ENCODE measurements at regions of chr18 and their contacts with region 1.

Region 1: DNA sequence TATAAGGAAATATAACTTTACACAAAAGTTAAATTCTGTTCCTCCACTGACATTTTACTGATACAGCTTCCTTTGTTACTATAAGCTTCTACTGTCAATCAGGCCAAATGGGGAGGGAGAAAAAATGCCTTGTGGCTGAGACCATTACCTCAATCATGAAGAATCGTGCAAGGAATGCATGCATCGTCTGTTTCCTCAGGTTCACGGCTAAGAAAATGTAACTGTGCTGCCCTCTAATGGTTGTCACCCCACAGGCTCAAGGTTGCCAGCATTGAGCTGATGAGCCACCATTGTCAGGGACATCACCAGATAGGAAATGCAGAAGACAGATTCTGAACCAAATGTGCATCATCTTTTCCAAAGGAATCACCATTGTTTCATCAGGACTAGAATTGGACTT is 426.9 kb downstream of the CDH2 start:
- DNase-seq: peak; percentile 67
- H3K4me3 Mint-ChIP-seq: no peak overlapping the region
- H3K27ac Mint-ChIP-seq: no peak overlapping the region
- H3K4me1 Mint-ChIP-seq: no peaks in the 10 kb centered on the region
- H3K27me3 Mint-ChIP-seq: peaks cover 12% of the 10 kb centered on the region
- CTCF ChIP-seq: peak; percentile 60

Region 2: DNA sequence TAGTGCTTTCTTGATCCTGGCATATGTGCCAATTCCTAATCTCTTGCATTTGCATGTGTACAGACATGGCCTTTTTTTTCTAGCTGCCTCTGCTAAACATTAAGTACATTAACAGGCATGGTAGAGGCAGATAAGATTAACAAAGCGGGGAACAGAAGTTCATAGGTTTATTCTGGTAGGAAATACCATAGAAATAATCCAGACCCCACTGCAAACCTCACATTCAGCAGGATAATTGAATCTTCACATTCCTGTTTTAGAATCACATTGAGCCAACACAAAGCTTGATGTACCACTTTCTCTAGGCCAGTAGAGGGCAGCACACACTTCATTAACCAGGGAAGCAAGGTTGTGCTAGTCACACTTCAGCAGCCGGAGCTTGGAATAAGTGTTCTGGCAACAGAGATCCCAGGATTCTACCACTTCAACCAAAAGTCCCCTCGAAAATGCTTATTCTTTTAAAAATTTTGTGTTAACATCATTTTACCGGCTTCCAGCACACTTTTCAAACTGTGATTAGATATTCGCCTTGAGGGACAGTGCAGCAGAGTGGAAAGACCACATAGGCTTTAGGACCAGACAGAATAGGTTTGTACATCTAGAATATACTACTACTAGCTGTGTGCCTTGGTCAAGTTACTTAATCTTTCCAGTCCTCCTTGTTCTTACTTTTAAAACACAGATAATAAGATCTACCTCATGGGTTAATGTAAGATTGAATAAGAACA is 144.7 kb before region 1 on chr18:
- CTCF ChIA-PET with region 1: interaction called, 90 read pairs
- POLR2A ChIA-PET with region 1: interaction called, 6 read pairs
- intact Hi-C with region 1: loop called (anchors 1 kb)
- DNase-seq: peak; percentile 78
- H3K4me3 Mint-ChIP-seq: no peak overlapping the region
- H3K27ac Mint-ChIP-seq: no peak overlapping the region
- H3K4me1 Mint-ChIP-seq: peaks cover 5% of the 10 kb centered on the region
- H3K27me3 Mint-ChIP-seq: no peaks in the 10 kb centered on the region
- CTCF ChIP-seq: peak; percentile 72

Region 3: DNA sequence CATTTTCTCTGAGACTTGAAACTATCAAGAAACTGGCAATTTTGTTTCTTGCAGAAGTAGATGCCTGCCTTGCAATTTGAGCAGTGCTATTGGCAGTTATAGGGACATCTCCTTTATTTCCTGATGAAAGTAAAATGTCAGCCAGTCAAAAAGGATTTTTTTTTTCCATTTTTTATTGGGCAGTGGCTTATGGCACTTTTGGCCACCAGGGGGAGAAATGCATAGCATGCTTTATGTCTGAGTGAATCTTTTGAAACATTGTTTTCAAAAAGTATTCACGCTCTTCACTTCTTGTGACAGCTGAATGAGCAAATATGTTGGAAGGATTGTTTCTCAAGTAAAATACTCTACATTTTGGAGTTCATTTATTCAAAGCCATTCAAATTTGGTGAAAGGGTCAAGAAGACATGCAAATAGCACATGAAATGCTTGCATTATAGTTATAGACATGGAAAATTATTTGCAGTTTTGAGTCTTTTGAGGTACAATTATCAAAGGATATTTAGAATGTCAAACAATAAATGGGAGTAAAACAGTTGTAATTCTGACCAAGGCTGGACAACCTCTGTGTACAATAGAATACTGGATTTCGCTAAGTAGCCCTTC is 64.1 kb before region 1 on chr18:
- CTCF ChIA-PET with region 1: interaction called, 35 read pairs
- POLR2A ChIA-PET with region 1: no interaction called
- intact Hi-C with region 1: loop called (anchors 1 kb)
- DNase-seq: peak; percentile 48
- H3K4me3 Mint-ChIP-seq: no peak overlapping the region
- H3K27ac Mint-ChIP-seq: no peak overlapping the region
- H3K4me1 Mint-ChIP-seq: no peaks in the 10 kb centered on the region
- H3K27me3 Mint-ChIP-seq: no peaks in the 10 kb centered on the region
- CTCF ChIP-seq: peak; percentile 59

Region 4: DNA sequence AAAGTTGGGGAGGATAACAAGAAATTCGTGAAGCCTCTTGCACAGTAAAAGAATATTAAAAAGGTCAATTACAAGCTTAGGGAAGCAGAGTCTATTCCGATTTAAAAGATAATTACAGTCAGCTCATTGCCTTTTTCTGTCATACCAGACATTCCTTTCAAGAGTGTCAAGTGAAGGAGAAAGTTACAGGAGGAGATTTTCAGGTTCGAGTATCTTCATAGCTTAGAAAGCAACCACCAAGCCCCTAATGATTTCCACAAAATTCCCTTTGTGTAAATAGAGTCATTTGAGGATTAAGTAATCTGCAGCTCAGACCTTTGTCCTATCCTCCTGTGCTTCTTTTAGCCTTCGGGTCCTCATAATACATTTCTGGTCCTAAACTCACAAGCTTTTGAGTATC is 12.0 kb after region 1 on chr18:
- CTCF ChIA-PET with region 1: interaction called, 16 read pairs
- POLR2A ChIA-PET with region 1: interaction called, 3 read pairs
- intact Hi-C with region 1: no loop called
- DNase-seq: no peak
- H3K4me3 Mint-ChIP-seq: no peak overlapping the region
- H3K27ac Mint-ChIP-seq: no peak overlapping the region
- H3K4me1 Mint-ChIP-seq: no peaks in the 10 kb centered on the region
- H3K27me3 Mint-ChIP-seq: no peaks in the 10 kb centered on the region
- CTCF ChIP-seq: no peak

Measured in MCF 10A (cell line).